Spleen (tissue), 13 donors: ENCODE measurements at regions of chr3 and their contacts with region 1.

Region 1: DNA sequence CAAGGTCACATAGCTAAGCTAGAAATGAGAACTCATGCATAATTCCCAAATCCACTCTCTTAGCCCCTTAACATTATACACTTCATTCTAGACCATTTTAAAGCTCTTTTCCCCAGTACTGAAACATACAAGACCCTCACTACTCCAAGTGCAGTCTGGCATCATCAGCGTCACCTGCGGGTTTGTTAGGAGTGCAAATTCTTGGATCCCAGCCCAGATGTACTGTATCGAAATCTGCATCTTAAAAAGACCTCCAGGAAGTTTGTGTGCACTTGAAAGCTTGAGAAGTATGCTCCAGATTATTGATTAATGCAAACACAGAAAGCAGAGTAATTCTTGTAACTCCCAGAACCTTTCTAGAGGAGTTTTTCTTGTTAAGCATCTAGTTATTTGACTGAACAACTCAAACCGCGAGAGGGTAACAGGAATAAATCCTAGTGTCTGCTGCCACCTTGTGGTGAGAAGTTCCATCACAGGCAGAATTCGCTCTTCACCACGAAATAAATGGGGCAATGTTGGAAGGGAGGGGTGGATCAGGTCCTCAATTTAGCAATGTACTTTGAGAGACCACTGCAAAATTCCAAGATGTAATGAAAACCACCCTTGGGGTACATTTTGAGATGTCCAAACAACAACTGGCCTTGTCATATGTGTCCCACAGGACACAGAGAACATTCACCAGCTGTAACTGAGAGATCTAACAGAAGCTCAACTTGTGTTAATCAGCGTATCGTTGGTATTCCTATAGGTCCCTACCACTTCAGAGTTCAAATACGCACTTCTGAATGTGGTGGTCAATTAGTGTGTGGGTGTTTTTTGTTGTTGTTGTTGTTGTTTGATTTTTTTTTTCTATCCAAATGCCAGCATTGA is 583 bp upstream of the C3orf49 start:
- DNase-seq: no peak
- H3K4me3 ChIP-seq: no peak overlapping the region
- H3K27ac ChIP-seq: no peak overlapping the region
- H3K4me1 ChIP-seq: peaks cover 0 to 6% (median 0%) of the 10 kb centered on the region in 6 donors
- H3K27me3 ChIP-seq: no peaks in the 10 kb centered on the region
- CTCF ChIP-seq: peak; percentile 70 to 89 (median 85)
- POLR2A ChIP-seq: no peak

Region 2: GRCh38 chr3:63349583-63350521 is 468.7 kb before region 1 on chr3:
- intact Hi-C with region 1: loop called (anchors 5 kb)
- DNase-seq: no peak
- H3K4me3 ChIP-seq: no peak overlapping the region
- H3K27ac ChIP-seq: no peak overlapping the region
- H3K4me1 ChIP-seq: peaks cover 0 to 5% (median 0%) of the 10 kb centered on the region in 6 donors
- H3K27me3 ChIP-seq: peaks cover 0 to 53% (median 0%) of the 10 kb centered on the region in 7 donors
- CTCF ChIP-seq: peak in 9 of 11 experiments; percentile 22 to 70 (median 50)
- POLR2A ChIP-seq: no peak